PC-9 (cell line): ENCODE measurements at regions of chr7 and their contacts with region 1.

Region 1: DNA sequence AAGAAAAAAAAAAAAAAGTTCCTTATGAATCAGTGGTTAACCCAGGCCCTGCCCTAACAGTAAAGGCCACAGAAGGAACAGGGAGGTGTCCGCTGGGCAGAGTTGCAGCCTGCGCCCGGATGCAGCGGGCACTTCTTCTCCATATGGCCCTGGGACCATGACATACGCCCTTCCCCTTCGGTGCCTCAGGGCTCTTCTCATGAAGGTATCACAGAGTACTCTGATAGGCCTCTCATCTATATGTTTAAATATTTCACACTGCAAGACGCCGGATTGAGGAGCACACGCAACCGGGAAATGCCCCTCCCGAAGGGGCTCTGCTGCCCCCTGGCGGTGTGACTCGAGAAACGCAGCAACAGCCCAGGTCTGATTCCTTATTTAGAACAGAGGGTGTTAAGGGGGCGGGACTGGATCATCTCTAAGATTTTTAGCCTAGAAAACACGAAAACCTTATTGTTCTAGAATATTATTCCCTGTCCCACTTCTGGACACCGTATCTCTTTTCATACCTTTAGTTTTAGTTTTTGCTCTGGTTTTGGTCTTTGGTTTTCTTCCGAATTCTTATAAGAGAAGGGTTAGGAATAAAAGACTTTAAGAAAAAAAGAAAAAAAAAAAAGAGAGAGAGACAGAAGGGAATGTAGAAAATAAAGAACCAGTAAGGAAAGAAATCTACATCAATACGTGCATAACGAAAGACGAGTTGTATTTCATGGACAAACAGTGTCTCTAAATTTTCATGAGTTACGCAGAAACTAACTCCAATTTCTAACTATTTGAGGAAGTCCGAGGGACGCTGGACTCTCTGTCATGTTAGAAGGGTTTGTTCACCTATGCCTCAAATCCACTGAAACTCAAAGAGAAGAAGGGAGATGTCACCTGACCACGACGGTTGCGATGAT is 12.0 kb downstream of the DAGLB start:
- DNase-seq: peak; percentile 73 to 84
- H3K4me3 ChIP-seq: no peak overlapping the region
- H3K27ac ChIP-seq: no peak overlapping the region
- H3K4me1 ChIP-seq: peaks cover 12% of the 10 kb centered on the region
- H3K27me3 ChIP-seq: no peaks in the 10 kb centered on the region
- CTCF ChIP-seq: peak; percentile 97

Region 2: DNA sequence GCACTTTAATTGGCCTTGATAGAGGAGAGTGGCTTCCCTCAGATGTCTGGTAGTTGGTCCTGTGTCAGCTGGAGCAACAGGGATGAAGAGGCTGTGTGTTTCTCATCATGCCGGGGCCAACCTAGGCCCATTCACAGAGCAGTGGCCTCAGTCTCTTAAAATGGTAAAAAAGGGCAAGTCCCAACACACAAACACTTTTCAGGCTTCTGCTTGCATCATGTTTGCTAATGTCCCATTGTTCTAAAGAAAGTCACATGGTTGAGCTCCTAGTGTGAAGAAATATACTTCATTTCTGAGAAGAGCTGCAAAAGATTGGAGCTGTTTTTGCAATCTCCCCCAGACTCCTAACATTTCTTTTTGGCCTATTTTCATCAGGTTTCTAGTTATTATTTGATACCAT is 1430.7 kb before region 1 on chr7:
- CTCF ChIA-PET with region 1: interaction called, 12 read pairs
- POLR2A ChIA-PET with region 1: no interaction called
- intact Hi-C with region 1: no loop called
- DNase-seq: no peak
- H3K4me3 ChIP-seq: no peak overlapping the region
- H3K27ac ChIP-seq: no peak overlapping the region
- H3K4me1 ChIP-seq: no peaks in the 10 kb centered on the region
- H3K27me3 ChIP-seq: no peaks in the 10 kb centered on the region
- CTCF ChIP-seq: no peak

Region 3: DNA sequence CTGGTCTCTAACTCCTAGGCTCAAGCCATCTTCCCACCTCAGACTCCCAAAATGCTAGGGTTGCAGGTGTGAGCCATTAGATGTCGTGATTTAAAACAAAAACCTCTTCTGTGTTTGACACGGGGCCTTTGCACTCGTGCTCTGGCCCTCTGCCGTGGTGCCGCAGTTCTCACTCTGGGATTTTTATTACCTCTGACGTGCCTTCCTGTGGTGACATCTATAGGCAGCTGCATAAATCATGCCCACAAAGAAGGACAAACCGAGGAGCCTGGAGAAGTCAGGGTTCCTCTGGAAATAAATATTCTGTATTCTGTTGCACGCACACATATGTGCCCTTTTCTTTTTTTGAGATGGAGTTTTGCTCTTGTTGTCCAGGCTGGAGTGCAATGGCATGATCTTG is 581.0 kb before region 1 on chr7:
- CTCF ChIA-PET with region 1: no interaction called
- POLR2A ChIA-PET with region 1: no interaction called
- intact Hi-C with region 1: loop called (anchors 5 kb)
- DNase-seq: no peak
- H3K4me3 ChIP-seq: no peak overlapping the region
- H3K27ac ChIP-seq: no peak overlapping the region
- H3K4me1 ChIP-seq: no peaks in the 10 kb centered on the region
- H3K27me3 ChIP-seq: no peaks in the 10 kb centered on the region
- CTCF ChIP-seq: no peak